Ascending aorta (tissue), 2 donors: ENCODE measurements at regions of chr15 and their contacts with region 1.

Region 1: GRCh38 chr15:25739687-25740121 is 123.4 kb downstream of the ATP10A start:
- DNase-seq: peak in 1 of 2 donors; percentile 65
- H3K4me3 ChIP-seq: no peak overlapping the region
- H3K27ac ChIP-seq: peak overlapping the region in 1 of 2 donors; percentile 22
- H3K4me1 ChIP-seq: peaks cover 35 to 59% of the 10 kb centered on the region in 2 donors
- H3K27me3 ChIP-seq: no peaks in the 10 kb centered on the region
- CTCF ChIP-seq: peak in 2 of 3 experiments; percentile 44 to 48

Region 2: GRCh38 chr15:25597571-25597970 is 142.1 kb before region 1 on chr15:
- intact Hi-C with region 1: no loop called
- DNase-seq: no peak
- H3K4me3 ChIP-seq: peak overlapping the region; percentile 18 to 49
- H3K27ac ChIP-seq: peak overlapping the region; percentile 64 to 78
- H3K4me1 ChIP-seq: no peaks in the 10 kb centered on the region
- H3K27me3 ChIP-seq: no peaks in the 10 kb centered on the region
- CTCF ChIP-seq: no peak

Region 3: GRCh38 chr15:25635191-25635590 is 104.5 kb before region 1 on chr15:
- intact Hi-C with region 1: no loop called
- DNase-seq: peak in 1 of 2 donors; percentile 15
- H3K4me3 ChIP-seq: no peak overlapping the region
- H3K27ac ChIP-seq: no peak overlapping the region
- H3K4me1 ChIP-seq: no peaks in the 10 kb centered on the region
- H3K27me3 ChIP-seq: no peaks in the 10 kb centered on the region
- CTCF ChIP-seq: no peak

Region 4: DNA sequence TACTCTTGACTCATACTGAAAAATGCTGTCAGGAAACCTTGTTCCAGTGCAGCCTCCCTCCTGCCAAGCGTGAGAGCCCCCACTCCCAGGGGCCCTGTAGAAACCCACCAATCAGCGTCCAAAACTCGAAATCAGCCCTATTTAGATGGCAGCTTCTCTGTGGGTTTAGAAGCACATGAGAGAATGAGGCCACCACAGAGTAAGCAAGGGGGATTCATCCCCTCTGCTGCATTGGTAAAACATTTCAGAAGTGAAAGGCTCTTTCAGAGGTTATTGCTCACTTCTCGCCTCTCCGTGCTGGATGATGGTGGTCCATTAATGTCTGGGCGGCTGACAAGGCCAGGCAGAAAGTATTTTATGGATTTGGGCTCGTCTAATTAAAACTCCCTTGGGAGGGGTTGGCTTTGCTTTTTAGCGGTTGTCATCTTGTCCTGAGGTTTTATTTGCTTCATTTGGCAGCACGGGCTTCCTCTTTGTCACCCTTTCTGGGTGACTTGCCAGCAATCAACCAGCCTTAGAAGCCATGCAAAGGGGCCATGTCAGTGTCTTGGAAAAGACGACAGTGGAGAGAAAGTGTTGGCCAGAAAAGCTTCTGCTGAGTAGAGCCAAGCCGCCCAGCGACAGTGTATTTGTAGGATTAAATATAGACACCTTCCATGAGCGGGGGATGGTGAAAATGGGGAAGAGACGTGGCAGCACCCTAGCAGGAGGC is 22.1 kb before region 1 on chr15:
- intact Hi-C with region 1: loop called (anchors 1 kb)
- DNase-seq: peak in 1 of 2 donors; percentile 81
- H3K4me3 ChIP-seq: no peak overlapping the region
- H3K27ac ChIP-seq: peak overlapping the region; percentile 84
- H3K4me1 ChIP-seq: peaks cover 5 to 38% of the 10 kb centered on the region in 2 donors
- H3K27me3 ChIP-seq: no peaks in the 10 kb centered on the region
- CTCF ChIP-seq: no peak

Region 5: GRCh38 chr15:25761971-25762662 is 22.4 kb after region 1 on chr15:
- intact Hi-C with region 1: loop called (anchors 2 kb)
- DNase-seq: peak in 1 of 2 donors; percentile 76
- H3K4me3 ChIP-seq: no peak overlapping the region
- H3K27ac ChIP-seq: peak overlapping the region; percentile 42 to 51
- H3K4me1 ChIP-seq: peaks cover 0 to 9% of the 10 kb centered on the region in 2 donors
- H3K27me3 ChIP-seq: no peaks in the 10 kb centered on the region
- CTCF ChIP-seq: no peak

Region 6: DNA sequence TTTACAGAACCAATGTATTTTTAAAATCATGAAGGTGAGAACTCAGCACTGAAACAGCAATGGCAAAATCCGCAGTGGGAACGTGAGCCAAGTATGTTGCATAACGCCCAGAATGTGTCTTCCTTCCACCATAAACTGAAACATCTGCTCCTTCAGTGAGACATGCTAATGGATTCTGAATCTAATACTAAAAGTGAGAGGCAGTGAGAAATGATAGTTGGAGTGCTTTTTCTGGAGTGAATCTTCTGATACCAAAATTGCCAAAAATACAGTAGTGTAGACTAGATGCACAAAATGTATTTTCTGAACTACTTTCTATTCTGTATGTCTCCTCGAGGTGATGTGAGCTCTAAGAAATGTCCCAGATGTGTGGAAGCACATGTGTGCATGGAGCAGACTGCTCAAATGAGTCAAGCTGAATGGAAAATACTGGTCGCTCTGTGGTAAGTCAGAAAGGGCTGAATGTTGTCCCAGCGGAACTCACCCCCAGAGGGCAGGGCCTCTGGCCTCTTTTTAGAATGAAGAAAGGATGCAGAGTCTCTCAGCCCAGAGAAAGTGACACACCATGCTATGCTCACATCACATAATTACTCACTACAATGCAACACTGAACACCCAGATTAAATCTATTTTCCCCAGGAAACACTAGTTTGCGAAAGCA is 50.4 kb after region 1 on chr15:
- intact Hi-C with region 1: loop called (anchors 5 kb)
- DNase-seq: peak in 1 of 2 donors; percentile 84
- H3K4me3 ChIP-seq: no peak overlapping the region
- H3K27ac ChIP-seq: peak overlapping the region; percentile 64 to 71
- H3K4me1 ChIP-seq: peaks cover 8 to 41% of the 10 kb centered on the region in 2 donors
- H3K27me3 ChIP-seq: no peaks in the 10 kb centered on the region
- CTCF ChIP-seq: no peak

Region 7: DNA sequence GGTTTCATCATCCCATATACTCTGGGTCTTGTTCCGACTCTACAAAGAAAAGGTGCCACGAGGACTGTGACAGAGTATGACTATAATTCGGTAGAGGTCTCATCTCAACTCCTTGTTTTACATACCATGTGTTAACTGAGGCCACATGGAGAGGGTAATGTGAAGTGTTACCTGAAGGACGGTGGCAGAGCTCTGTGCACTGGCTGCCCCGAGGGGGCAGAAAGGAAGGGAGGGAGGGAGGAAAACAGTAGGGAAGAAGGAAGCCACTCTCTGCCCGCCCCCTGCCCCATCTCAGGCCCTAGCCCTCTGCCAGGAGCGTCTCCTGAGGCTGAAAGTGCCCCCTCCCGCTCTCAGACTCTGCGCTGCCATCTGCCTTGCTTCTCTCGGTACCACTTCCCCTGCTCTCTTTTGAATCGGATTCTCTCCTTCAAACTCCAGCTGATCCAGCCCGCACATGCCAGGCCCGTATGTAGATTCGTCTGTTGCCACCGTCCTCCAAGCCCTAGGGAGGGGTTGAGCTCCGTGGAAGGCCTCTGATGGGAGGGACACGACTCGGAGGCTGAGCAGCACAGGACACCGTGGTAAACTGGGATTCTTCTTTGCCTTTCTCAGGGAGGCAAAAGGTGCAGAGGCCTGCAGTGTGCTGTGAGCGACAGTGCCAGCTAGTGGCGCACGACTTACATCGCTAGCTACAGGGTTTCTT is 193.9 kb after region 1 on chr15:
- intact Hi-C with region 1: loop called (anchors 5 kb)
- DNase-seq: peak in 1 of 2 donors; percentile 88
- H3K4me3 ChIP-seq: peak overlapping the region; percentile 31 to 53
- H3K27ac ChIP-seq: peak overlapping the region in 1 of 2 donors; percentile 22
- H3K4me1 ChIP-seq: peaks cover 0 to 17% of the 10 kb centered on the region in 2 donors
- H3K27me3 ChIP-seq: no peaks in the 10 kb centered on the region
- CTCF ChIP-seq: peak; percentile 61 to 76 (median 71)

Region 8: GRCh38 chr15:26082221-26083109 is 342.8 kb after region 1 on chr15:
- intact Hi-C with region 1: loop called (anchors 5 kb)
- DNase-seq: peak; percentile 90 to 99
- H3K4me3 ChIP-seq: peak overlapping the region; percentile 68 to 89
- H3K27ac ChIP-seq: peak overlapping the region; percentile 89 to 92
- H3K4me1 ChIP-seq: peaks cover 0 to 7% of the 10 kb centered on the region in 2 donors
- H3K27me3 ChIP-seq: no peaks in the 10 kb centered on the region
- CTCF ChIP-seq: peak in 1 of 3 experiments; percentile 15